ENCODE measurements at regions of chr11 and their contacts with region 1.

Region 1: GRCh38 chr11:61816736-61817455 is at the start of gene FADS1:
- DNase-seq: peak; percentile 88
- H3K4me3 Mint-ChIP-seq: peak within 1 kb of the TSS; percentile 97
- H3K27ac Mint-ChIP-seq: peak within 1 kb of the TSS; percentile 83
- H3K4me1 Mint-ChIP-seq: peaks cover 11% of the 10 kb centered on the region
- H3K27me3 Mint-ChIP-seq: peaks cover 11% of the 10 kb centered on the region
- total RNA-seq, gene FADS1: 63.6 to 68.2 TPM

Region 2: GRCh38 chr11:61803889-61804647 is 12.8 kb before region 1 on chr11:
- CTCF ChIA-PET with region 1: interaction called, 81 read pairs
- POLR2A ChIA-PET with region 1: interaction called, 29 read pairs
- DNase-seq: no peak
- H3K4me3 Mint-ChIP-seq: no peak overlapping the region
- H3K27ac Mint-ChIP-seq: peak overlapping the region; percentile 7
- H3K4me1 Mint-ChIP-seq: peaks cover 13% of the 10 kb centered on the region
- H3K27me3 Mint-ChIP-seq: no peaks in the 10 kb centered on the region

Region 3: GRCh38 chr11:61827571-61828378 is 10.9 kb after region 1 on chr11 and contains the start of gene FADS2:
- CTCF ChIA-PET with region 1: interaction called, 22 read pairs
- POLR2A ChIA-PET with region 1: interaction called, 81 read pairs
- DNase-seq: peak; percentile 92
- H3K4me3 Mint-ChIP-seq: peak within 1 kb of the TSS; percentile 95
- H3K27ac Mint-ChIP-seq: peak within 1 kb of the TSS; percentile 91
- H3K4me1 Mint-ChIP-seq: peaks cover 46% of the 10 kb centered on the region
- H3K27me3 Mint-ChIP-seq: peaks cover 20% of the 10 kb centered on the region
- total RNA-seq, gene FADS2: 251 to 253 TPM

Region 4: DNA sequence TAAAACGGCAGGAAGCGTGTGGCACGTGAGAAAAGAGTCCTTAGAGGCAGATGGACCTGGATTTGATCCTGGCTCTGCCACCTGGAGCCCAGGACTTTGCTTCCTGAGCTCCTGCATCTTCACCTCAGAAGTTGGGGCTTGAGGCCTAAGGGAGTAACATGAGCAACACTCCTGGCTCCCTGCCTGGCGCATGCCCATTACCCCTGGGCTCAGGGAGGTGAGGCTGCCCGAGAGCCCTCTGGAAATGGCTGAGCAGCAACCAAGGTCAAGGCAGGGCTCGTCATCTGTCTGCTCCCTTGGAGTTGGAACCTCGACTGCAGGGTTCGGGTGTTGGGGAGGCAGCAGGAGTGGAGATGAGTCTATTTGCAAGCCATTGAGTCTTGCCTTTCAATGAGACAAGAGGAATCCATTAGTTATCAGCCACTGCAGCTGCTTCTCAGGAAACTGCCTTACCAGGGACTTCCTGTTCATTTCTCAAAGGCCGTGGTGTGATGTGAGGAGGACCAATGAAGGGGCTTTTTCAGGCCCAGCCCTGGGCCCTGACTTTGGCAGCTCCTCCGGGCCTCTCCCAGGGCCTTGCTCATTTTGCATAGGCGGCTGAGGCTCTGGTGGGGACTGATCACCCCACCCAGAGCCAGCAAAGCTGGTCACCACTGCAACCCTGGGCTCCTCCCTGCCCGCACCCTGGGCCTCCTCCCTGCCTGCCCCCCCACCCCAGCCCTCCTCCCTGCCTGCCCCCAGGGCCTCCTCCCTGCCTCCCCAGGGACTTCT is 17.6 kb after region 1 on chr11:
- CTCF ChIA-PET with region 1: interaction called, 22 read pairs
- POLR2A ChIA-PET with region 1: interaction called, 81 read pairs
- DNase-seq: peak; percentile 86
- H3K4me3 Mint-ChIP-seq: peak overlapping the region; percentile 58
- H3K27ac Mint-ChIP-seq: peak overlapping the region; percentile 99
- H3K4me1 Mint-ChIP-seq: peaks cover 67% of the 10 kb centered on the region
- H3K27me3 Mint-ChIP-seq: peaks cover 1% of the 10 kb centered on the region

Measured in activated CD4-positive, alpha-beta memory T cell treated with anti-CD3 and anti-CD28 coated beads, Interleukin-2, amount 10 ng/mL, durations not matched to agents 7 days and 5 days (primary cell).